Upper lobe of right lung (tissue), 1 donor: ENCODE measurements at regions of chr10 and their contacts with region 1.

Region 1: GRCh38 chr10:71618176-71618575 is 101.4 kb downstream of the C10orf105 start:
- DNase-seq: no peak
- ATAC-seq: no peak
- H3K4me3 ChIP-seq: no peak overlapping the region
- H3K27ac ChIP-seq: no peak overlapping the region
- H3K4me1 ChIP-seq: peaks cover 28% of the 10 kb centered on the region
- H3K27me3 ChIP-seq: no peaks in the 10 kb centered on the region
- CTCF ChIP-seq: no peak

Region 2: DNA sequence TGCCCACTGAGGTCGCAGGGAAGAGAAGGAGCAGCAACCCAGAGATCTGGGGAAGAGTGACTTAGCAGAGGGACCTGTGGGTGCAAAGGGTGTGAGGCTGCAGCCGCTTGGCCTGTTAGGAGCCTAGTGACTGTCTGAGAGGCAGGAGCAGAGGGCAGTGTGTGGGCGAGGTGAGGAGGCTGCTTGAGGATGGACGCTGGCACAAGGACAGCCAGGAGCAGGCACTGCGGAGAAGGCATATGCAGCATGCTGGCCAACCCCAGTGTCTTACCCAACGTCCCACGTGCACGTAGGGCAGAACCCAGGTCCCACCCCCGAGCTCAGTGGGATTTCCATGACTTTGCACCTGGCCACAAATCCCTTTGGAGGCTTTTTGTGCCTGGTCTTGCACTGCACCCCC is 47.3 kb after region 1 on chr10:
- intact Hi-C with region 1: loop called (anchors 2 kb)
- DNase-seq: no peak
- ATAC-seq: no peak
- H3K4me3 ChIP-seq: no peak overlapping the region
- H3K27ac ChIP-seq: no peak overlapping the region
- H3K4me1 ChIP-seq: no peaks in the 10 kb centered on the region
- H3K27me3 ChIP-seq: no peaks in the 10 kb centered on the region
- CTCF ChIP-seq: no peak